ENCODE measurements at regions of chr6 and their contacts with region 1.

Region 1: GRCh38 chr6:30828027-30828960 is 56.0 kb upstream of the DDR1 start:
- DNase-seq: peak; percentile 94
- H3K4me3 ChIP-seq: peak overlapping the region in 1 of 4 donors; percentile 8
- H3K27ac ChIP-seq: peak overlapping the region; percentile 48 to 80 (median 70)
- H3K4me1 ChIP-seq: peaks cover 7 to 44% (median 22%) of the 10 kb centered on the region in 4 donors
- H3K27me3 ChIP-seq: no peaks in the 10 kb centered on the region
- CTCF ChIP-seq: peak; percentile 90 to 98 (median 93)
- EP300 ChIP-seq: no peak
- POLR2A ChIP-seq: no peak

Region 2: GRCh38 chr6:30411515-30412207 is 416.6 kb before region 1 on chr6:
- in situ Hi-C with region 1: no loop called
- intact Hi-C with region 1: no loop called
- DNase-seq: peak; percentile 65
- H3K4me3 ChIP-seq: no peak overlapping the region
- H3K27ac ChIP-seq: no peak overlapping the region
- H3K4me1 ChIP-seq: no peaks in the 10 kb centered on the region
- H3K27me3 ChIP-seq: peaks cover 64% of the 10 kb centered on the region
- CTCF ChIP-seq: peak; percentile 56 to 91 (median 81)
- EP300 ChIP-seq: no peak
- POLR2A ChIP-seq: no peak

Region 3: DNA sequence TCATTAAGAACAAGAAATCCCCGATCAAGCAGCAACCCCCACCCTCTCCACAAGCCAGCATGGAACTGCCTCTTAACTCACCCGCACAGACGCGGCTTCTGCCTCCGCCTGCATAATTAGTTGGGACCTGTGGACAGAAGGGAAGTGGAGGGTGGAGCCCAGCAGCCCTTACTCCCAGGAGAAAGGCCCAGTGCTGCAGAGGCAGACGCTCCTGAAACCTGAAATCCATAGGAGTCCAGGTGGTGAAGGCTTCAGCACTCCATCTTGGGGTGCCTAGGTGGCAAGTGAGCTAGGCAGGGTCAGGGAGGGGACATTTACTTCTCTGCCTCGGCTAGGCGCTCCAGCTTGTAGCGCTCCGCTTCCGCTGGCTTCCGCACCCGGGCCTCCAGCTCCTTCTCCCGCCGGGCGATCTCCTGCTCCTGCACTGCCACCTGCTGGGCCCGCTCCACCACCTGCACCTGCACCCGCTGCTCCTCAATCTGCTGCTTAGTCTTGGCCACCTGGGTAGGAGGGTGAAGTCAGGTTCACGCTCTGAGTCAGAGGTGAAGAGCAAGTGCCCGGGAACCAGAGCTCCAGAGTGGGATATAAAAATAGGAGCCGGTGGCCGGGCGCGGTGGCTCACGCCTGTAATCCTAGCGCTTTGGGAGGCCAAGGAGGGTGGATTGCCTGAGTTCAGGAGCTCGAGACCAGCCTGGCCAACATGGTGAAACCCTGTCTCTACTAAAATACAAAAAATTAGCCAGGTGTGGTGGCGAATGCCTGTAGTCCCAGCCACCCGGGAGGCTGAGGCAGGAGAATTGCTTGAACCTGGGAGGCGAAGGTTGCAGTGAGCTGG is 97.5 kb before region 1 on chr6:
- in situ Hi-C with region 1: loop called in 1 of 4 experiments (anchors 10 kb)
- intact Hi-C with region 1: no loop called
- DNase-seq: peak; percentile 92
- H3K4me3 ChIP-seq: peak overlapping the region in 1 of 4 donors; percentile 29
- H3K27ac ChIP-seq: peak overlapping the region; percentile 52 to 73 (median 71)
- H3K4me1 ChIP-seq: peaks cover 7 to 22% (median 9%) of the 10 kb centered on the region in 4 donors
- H3K27me3 ChIP-seq: no peaks in the 10 kb centered on the region
- CTCF ChIP-seq: peak; percentile 60 to 86 (median 69)
- EP300 ChIP-seq: no peak
- POLR2A ChIP-seq: no peak

Region 4: DNA sequence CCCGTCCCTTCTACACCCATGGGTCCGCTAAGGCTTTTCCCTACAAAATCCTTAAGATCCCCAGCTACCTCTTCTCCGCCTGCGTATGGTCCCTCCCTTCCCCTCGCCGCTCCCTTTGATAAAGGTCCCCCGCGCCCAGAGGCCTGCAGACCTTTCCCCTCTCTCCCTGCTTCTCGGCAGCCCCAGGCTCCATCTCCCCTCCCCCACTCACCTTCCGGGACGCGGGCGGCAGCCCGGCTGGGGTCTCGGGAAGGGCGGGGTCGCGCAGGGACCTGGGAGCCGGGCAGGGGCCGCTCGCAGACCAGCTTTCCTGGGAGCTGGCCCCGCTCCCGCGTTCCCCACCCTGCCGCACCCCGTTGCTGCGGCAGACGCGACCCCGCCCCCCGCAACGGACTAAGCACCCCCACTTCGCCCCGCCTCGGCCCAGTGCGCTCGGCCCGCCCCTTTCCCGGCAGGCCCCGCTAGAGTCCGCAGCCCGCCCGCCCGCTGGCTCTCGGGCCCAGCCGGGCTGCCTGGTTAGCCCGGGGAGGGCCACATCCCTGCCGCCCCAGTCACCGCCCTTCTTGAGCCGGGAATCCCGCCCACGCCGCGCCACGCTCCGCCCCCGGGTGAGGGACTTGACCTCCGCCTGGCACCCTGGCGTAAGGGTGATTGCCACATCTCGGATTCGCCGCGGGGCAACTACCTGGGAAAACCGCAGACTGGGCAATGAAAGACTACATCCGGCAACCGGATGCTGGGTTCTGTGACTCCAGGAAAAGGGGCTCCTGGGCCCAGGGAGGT is 85.8 kb before region 1 on chr6 and contains the start of gene FLOT1:
- in situ Hi-C with region 1: loop called in 2 of 4 experiments (anchors 10 kb)
- intact Hi-C with region 1: loop called (anchors 5 kb)
- DNase-seq: peak; percentile 99
- H3K4me3 ChIP-seq: peak within 1 kb of the TSS; percentile 75 to 87 (median 78)
- H3K27ac ChIP-seq: peak within 1 kb of the TSS; percentile 96 to 98 (median 98)
- H3K4me1 ChIP-seq: peaks cover 26 to 64% (median 37%) of the 10 kb centered on the region in 4 donors
- H3K27me3 ChIP-seq: no peaks in the 10 kb centered on the region
- CTCF ChIP-seq: no peak
- EP300 ChIP-seq: peak; percentile 1
- POLR2A ChIP-seq: peak; percentile 88
- total RNA-seq, gene FLOT1: 123 to 146 (median 139) TPM

Region 5: GRCh38 chr6:30877419-30878371 is 49.4 kb after region 1 on chr6:
- in situ Hi-C with region 1: loop called in 3 of 4 experiments (anchors 5 to 10 kb)
- intact Hi-C with region 1: loop called (anchors 2 kb)
- DNase-seq: peak; percentile 93
- H3K4me3 ChIP-seq: peak overlapping the region in 3 of 4 donors; percentile 17 to 53 (median 30)
- H3K27ac ChIP-seq: peak overlapping the region; percentile 85 to 87 (median 87)
- H3K4me1 ChIP-seq: peaks cover 11 to 38% (median 19%) of the 10 kb centered on the region in 4 donors
- H3K27me3 ChIP-seq: no peaks in the 10 kb centered on the region
- CTCF ChIP-seq: peak; percentile 86 to 98 (median 89)
- EP300 ChIP-seq: no peak
- POLR2A ChIP-seq: no peak

Region 6: DNA sequence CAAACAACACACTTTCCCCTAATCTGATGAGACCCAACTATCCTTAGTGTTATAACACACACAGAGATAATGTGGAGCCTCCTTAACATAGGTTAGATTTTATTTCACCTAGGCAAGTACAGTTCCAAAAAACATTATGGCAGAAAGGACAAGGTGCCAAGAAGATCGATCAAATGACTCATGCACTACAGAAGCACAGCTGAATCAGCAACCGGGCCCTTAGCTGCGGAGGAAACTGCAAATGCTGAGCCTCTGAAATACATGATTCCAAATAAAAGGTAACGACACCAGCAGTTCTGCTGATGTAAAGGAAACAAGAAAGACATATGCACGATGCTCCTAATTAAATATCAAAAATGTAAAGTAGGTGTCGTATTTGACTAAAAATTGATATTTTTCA is 135.3 kb after region 1 on chr6:
- in situ Hi-C with region 1: no loop called
- intact Hi-C with region 1: no loop called
- DNase-seq: no peak
- H3K4me3 ChIP-seq: no peak overlapping the region
- H3K27ac ChIP-seq: no peak overlapping the region
- H3K4me1 ChIP-seq: no peaks in the 10 kb centered on the region
- H3K27me3 ChIP-seq: peaks cover 23% of the 10 kb centered on the region
- CTCF ChIP-seq: no peak
- EP300 ChIP-seq: no peak
- POLR2A ChIP-seq: no peak

Region 7: GRCh38 chr6:31079656-31080261 is 251.5 kb after region 1 on chr6:
- in situ Hi-C with region 1: loop called in 2 of 4 experiments (anchors 10 kb)
- intact Hi-C with region 1: loop called (anchors 10 kb)
- DNase-seq: peak; percentile 64
- H3K4me3 ChIP-seq: peak overlapping the region in 1 of 4 donors; percentile 2
- H3K27ac ChIP-seq: no peak overlapping the region
- H3K4me1 ChIP-seq: peaks cover 0 to 4% (median 0%) of the 10 kb centered on the region in 4 donors
- H3K27me3 ChIP-seq: peaks cover 14% of the 10 kb centered on the region
- CTCF ChIP-seq: peak; percentile 70 to 84 (median 76)
- EP300 ChIP-seq: no peak
- POLR2A ChIP-seq: no peak

Region 8: GRCh38 chr6:31087494-31088089 is 259.3 kb after region 1 on chr6:
- in situ Hi-C with region 1: loop called in 1 of 4 experiments (anchors 10 kb)
- intact Hi-C with region 1: loop called (anchors 10 kb)
- DNase-seq: peak; percentile 89
- H3K4me3 ChIP-seq: no peak overlapping the region
- H3K27ac ChIP-seq: peak overlapping the region in 1 of 4 donors; percentile 7
- H3K4me1 ChIP-seq: peaks cover 0 to 24% (median 0%) of the 10 kb centered on the region in 4 donors
- H3K27me3 ChIP-seq: peaks cover 5% of the 10 kb centered on the region
- CTCF ChIP-seq: peak; percentile 72 to 80 (median 79)
- EP300 ChIP-seq: no peak
- POLR2A ChIP-seq: no peak

Measured in transverse colon (tissue), 4 donors.